ENCODE measurements at regions of chr3 and their contacts with region 1.

Region 1: GRCh38 chr3:64533617-64534317 is 154.0 kb downstream of the ADAMTS9 start:
- DNase-seq: peak; percentile 14
- H3K4me3 ChIP-seq: no peak overlapping the region
- CTCF ChIP-seq: peak; percentile 95

Region 2: DNA sequence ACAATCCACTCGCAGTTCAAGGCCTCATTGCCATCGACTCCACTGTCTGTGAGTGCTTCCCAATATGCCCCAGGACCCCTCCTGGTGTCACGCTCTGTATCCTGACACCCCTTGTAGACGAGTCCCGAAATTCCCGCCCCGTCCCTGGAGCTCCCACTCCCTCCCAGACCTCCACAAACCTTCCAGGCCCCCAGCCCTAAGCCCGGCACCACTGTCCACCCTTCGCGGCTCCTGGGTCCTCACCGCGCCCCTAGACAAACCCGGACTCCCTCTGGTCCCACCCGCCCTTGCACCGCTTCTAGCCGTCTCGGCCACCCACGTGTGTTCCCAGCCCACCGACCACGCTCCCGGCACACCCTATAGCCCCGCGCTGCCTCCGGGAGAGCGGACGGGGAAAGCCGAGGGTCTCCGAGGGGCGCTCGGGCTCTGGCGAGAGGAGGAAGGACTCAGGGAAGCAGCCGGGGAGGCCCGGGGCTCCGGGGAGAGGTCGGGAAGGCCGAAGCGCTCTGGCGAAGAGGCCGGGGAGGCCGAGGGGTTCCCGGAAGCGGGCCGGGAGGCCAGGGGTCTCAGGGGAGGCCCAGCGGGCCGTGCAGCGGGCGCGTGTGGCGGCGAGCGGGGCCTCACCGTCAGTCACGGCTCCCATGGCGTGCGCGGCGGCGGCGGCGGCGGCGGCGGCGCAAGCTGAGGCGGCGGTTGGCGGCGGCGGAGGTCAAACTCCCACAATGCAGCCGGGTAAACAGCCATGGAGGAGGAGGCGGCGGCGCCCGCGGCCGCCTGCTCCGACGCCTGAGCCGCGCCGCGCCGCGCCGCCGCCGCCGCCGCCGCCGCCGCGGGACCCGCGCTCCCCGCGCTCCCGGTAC is 670.4 kb before region 1 on chr3 and contains the starts of genes ATXN7 and THOC7:
- CTCF ChIA-PET with region 1: no interaction called
- POLR2A ChIA-PET with region 1: no interaction called
- DNase-seq: no peak
- H3K4me3 ChIP-seq: peak within 1 kb of the TSS; percentile 88
- CTCF ChIP-seq: no peak

Region 3: GRCh38 chr3:64345371-64345770 is 188.4 kb before region 1 on chr3:
- CTCF ChIA-PET with region 1: no interaction called
- POLR2A ChIA-PET with region 1: no interaction called
- DNase-seq: no peak
- H3K4me3 ChIP-seq: no peak overlapping the region
- CTCF ChIP-seq: no peak

Region 4: DNA sequence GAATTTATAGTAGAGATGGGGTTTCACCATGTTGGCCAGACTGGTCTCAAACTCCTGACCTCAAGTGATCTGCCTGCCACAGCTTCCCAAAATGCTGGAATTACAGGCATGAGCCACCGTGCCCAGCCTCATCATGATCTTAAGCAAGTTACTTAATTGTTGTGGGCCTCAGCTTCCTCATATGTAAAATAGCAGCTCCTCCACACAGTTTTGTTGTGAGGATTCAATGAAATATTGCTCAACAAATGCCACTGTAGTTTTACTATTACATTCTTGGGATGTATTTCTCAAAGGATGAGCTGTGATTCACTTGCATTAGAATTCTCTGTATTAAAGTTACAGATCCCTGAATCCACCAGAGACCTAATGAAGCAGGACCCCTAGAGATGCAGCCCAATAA is 14.8 kb before region 1 on chr3:
- CTCF ChIA-PET with region 1: interaction called, 94 read pairs
- POLR2A ChIA-PET with region 1: no interaction called
- DNase-seq: peak; percentile 31
- H3K4me3 ChIP-seq: no peak overlapping the region
- CTCF ChIP-seq: no peak

Region 5: GRCh38 chr3:65245133-65246063 is 711.6 kb after region 1 on chr3:
- CTCF ChIA-PET with region 1: interaction called, 39 read pairs
- POLR2A ChIA-PET with region 1: no interaction called
- DNase-seq: no peak
- H3K4me3 ChIP-seq: no peak overlapping the region
- CTCF ChIP-seq: no peak